Activated T-helper 2 cell treated with anti-CD3 and anti-CD28 coated beads, Interferon-gamma antibody, Interleukin-2, Interleukin-4, amounts not matched to agents 10 μg/mL and 5 μg/mL and 100 μg/mL, durations not matched to agents 14 hours and 24 hours and 36 hours (primary cell): ENCODE measurements at regions of chrX and their contacts with region 1.

Region 1: DNA sequence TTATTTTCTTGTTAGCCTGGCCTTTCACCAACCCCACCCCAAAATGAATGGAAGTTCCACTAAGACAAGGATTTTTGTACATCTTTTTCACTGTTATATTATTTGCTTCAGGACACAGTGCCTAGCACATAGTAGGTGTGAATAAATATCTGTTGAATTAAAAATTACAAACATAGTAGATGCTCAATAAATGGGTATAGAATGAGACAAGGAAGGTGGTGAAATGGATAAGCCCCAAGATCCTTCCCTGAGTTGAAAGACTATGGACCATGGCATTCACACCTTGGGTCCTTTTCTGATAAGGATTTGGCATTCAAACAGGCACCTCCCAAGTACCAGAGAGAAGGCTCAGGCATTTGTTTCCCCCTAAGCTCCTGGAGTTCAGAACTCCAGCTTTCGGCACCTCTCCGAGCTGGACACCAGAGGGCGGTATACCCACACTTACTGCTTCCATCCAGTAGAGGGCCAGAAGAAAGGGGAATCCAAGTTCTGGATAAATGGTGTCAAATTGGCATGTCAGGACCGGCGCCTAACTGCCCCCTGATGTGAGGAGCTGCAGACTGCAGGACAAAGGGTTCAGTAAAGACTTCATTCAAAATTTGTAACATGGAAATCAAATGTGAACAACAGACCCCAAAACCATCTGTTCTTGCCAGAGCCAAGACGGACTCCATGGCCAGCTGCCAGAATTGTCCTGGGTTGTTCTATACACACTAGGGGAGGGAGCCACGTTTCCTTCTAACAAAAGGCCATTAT is 193.0 kb downstream of the GPC3 start:
- DNase-seq: peak; percentile 18
- H3K4me3 Mint-ChIP-seq: no peak overlapping the region
- H3K27ac Mint-ChIP-seq: no peak overlapping the region
- H3K4me1 Mint-ChIP-seq: no peaks in the 10 kb centered on the region
- H3K27me3 Mint-ChIP-seq: no peaks in the 10 kb centered on the region

Region 2: DNA sequence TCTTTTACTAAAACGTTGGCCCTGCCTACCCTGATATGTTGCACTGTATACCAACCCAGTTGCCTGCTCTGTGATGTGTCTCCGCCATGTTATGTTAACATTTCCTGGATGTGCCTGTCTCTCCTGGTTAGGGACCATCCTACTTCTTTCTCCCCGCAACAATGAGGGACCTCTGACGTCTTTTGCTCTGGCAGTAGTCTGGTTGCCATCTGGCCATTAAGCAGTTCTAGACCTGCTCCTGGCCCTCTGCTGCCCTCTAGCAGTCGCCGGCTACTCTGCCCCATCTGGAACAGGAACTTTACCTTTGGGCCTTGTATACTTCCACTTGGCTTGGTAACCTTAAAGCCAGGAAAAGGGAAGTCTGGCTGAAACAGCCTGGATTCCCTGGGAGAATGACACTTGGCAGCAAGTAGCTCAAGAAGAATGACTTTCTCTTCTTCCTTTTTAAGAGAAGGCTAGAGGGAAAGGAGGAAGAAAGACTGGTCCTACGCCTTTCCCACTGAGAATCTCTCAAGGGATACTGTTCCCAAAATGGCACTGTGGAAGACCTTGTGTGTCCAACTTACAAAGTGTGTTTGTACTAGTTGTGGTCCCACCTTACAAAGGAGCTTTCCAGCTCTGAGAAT is 129.5 kb after region 1 on chrX:
- intact Hi-C with region 1: loop called (anchors 2 kb)
- DNase-seq: peak; percentile 9
- H3K4me3 Mint-ChIP-seq: no peak overlapping the region
- H3K27ac Mint-ChIP-seq: no peak overlapping the region
- H3K4me1 Mint-ChIP-seq: peaks cover 25% of the 10 kb centered on the region
- H3K27me3 Mint-ChIP-seq: no peaks in the 10 kb centered on the region

Region 3: DNA sequence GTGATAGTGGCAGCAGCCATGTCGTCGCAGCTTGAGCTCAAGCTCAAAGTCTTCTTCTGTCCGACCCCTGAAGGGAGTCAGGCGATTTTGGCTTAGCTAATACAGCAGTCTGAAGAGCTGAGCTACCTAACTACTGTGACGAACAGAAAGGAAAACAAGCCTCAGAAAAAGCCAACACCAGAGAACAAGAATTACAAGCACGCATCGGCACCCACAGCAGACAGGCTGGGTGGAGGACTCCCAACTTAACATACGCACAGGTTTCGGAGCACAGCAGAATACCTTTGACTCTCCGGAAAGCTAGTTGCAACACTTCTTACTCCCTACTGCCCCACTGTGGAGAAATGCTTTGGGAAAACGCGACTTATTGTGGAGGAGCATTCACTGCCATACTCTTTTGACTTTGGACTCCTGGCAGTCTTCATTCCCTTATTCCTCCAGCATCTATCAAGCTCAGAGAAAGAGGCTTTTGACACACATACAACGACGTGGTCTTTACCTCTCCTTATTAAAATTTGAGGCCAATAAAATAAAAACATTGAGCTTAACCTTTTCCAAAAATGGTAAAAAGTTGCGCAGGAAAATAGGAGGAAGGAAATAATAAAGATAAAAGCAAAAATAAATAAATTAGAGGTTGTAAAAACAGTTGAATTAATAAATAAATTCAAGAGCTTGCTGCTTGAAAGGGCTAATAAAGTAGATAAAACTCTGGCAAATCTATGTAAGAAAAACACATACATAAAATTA is 234.4 kb after region 1 on chrX:
- intact Hi-C with region 1: loop called (anchors 1 kb)
- DNase-seq: peak; percentile 10
- H3K4me3 Mint-ChIP-seq: no peak overlapping the region
- H3K27ac Mint-ChIP-seq: no peak overlapping the region
- H3K4me1 Mint-ChIP-seq: peaks cover 3% of the 10 kb centered on the region
- H3K27me3 Mint-ChIP-seq: no peaks in the 10 kb centered on the region

Region 4: DNA sequence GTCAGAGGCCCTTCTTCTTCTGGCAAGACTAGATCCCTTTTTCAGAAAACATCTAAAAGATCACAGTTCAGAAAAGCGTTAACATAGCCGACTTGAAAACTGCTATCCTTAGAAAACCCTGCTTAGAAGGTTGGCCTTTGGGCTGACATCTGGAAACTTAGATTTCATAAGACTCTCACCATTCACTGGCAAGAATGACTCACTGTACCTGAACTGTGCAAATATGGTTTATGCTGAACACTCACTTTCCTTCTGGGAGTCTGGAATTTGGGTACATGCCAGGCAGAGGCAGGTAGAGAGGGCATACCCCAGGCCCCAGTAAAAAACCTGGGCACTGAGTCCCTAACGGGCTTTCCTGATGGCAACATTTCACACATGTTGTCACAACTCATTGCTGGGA is 281.8 kb after region 1 on chrX:
- intact Hi-C with region 1: no loop called
- DNase-seq: no peak
- H3K4me3 Mint-ChIP-seq: no peak overlapping the region
- H3K27ac Mint-ChIP-seq: no peak overlapping the region
- H3K4me1 Mint-ChIP-seq: no peaks in the 10 kb centered on the region
- H3K27me3 Mint-ChIP-seq: peaks cover 2% of the 10 kb centered on the region

Region 5: GRCh38 chrX:134144231-134144630 is 351.9 kb after region 1 on chrX:
- intact Hi-C with region 1: loop called (anchors 5 kb)
- DNase-seq: no peak
- H3K4me3 Mint-ChIP-seq: no peak overlapping the region
- H3K27ac Mint-ChIP-seq: no peak overlapping the region
- H3K4me1 Mint-ChIP-seq: peaks cover 5% of the 10 kb centered on the region
- H3K27me3 Mint-ChIP-seq: peaks cover 6% of the 10 kb centered on the region

Region 6: DNA sequence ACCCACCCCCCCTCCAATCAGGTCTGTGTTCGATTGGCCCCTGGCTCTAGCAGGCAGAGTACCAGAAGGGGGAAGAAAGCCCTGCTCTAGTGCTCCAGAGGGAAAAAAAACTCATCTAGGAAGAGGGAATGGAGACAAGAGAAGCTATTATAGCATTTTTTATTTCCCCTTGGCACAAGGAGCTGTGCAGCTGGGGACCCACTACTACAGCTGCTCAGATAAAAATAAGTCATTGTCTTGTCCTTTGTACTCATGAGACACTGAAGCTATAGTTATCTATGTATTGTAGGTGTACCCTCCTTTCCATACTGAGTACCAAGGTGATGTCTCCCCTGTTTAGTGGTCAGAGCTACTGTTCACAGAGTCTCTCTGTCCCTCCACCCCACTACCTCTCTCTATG is 458.9 kb after region 1 on chrX:
- intact Hi-C with region 1: loop called (anchors 5 kb)
- DNase-seq: no peak
- H3K4me3 Mint-ChIP-seq: no peak overlapping the region
- H3K27ac Mint-ChIP-seq: no peak overlapping the region
- H3K4me1 Mint-ChIP-seq: peaks cover 2% of the 10 kb centered on the region
- H3K27me3 Mint-ChIP-seq: peaks cover under 1% of the 10 kb centered on the region